ENCODE measurements at regions of chr14 and their contacts with region 1.

Region 1: GRCh38 chr14:28157887-28158791 is 608.4 kb upstream of the FOXG1 start:
- DNase-seq: no peak
- H3K4me3 ChIP-seq: no peak overlapping the region
- H3K27ac ChIP-seq: no peak overlapping the region
- H3K4me1 ChIP-seq: no peaks in the 10 kb centered on the region
- H3K27me3 ChIP-seq: no peaks in the 10 kb centered on the region
- CTCF ChIP-seq: no peak
- EP300 ChIP-seq: no peak
- POLR2A ChIP-seq: no peak

Region 2: GRCh38 chr14:26709019-26709418 is 1449.1 kb before region 1 on chr14:
- in situ Hi-C with region 1: no loop called
- intact Hi-C with region 1: loop called (anchors 10 kb)
- DNase-seq: no peak
- H3K4me3 ChIP-seq: no peak overlapping the region
- H3K27ac ChIP-seq: no peak overlapping the region
- H3K4me1 ChIP-seq: no peaks in the 10 kb centered on the region
- H3K27me3 ChIP-seq: no peaks in the 10 kb centered on the region
- CTCF ChIP-seq: no peak
- EP300 ChIP-seq: no peak
- POLR2A ChIP-seq: no peak

Region 3: GRCh38 chr14:28436821-28437220 is 278.7 kb after region 1 on chr14:
- in situ Hi-C with region 1: no loop called
- intact Hi-C with region 1: no loop called
- DNase-seq: no peak
- H3K4me3 ChIP-seq: no peak overlapping the region
- H3K27ac ChIP-seq: no peak overlapping the region
- H3K4me1 ChIP-seq: no peaks in the 10 kb centered on the region
- H3K27me3 ChIP-seq: no peaks in the 10 kb centered on the region
- CTCF ChIP-seq: no peak
- EP300 ChIP-seq: no peak
- POLR2A ChIP-seq: no peak

Measured in transverse colon (tissue), 4 donors.